ENCODE measurements at regions of chr19 and their contacts with region 1.

Region 1: GRCh38 chr19:51514866-51515481 is 13.4 kb upstream of the SIGLEC12 start:
- DNase-seq: no peak
- H3K4me3 ChIP-seq: no peak overlapping the region
- H3K27ac ChIP-seq: no peak overlapping the region
- H3K4me1 ChIP-seq: no peaks in the 10 kb centered on the region
- H3K27me3 ChIP-seq: no peaks in the 10 kb centered on the region
- CTCF ChIP-seq: peak; percentile 74

Region 2: GRCh38 chr19:51473009-51473707 is 41.8 kb before region 1 on chr19:
- intact Hi-C with region 1: loop called (anchors 5 kb)
- DNase-seq: peak; percentile 83
- H3K4me3 ChIP-seq: no peak overlapping the region
- H3K27ac ChIP-seq: no peak overlapping the region
- H3K4me1 ChIP-seq: no peaks in the 10 kb centered on the region
- H3K27me3 ChIP-seq: no peaks in the 10 kb centered on the region
- CTCF ChIP-seq: peak; percentile 82